Naive thymus-derived CD4-positive, alpha-beta T cell (primary cell): ENCODE measurements at regions of chr2 and their contacts with region 1.

Region 1: DNA sequence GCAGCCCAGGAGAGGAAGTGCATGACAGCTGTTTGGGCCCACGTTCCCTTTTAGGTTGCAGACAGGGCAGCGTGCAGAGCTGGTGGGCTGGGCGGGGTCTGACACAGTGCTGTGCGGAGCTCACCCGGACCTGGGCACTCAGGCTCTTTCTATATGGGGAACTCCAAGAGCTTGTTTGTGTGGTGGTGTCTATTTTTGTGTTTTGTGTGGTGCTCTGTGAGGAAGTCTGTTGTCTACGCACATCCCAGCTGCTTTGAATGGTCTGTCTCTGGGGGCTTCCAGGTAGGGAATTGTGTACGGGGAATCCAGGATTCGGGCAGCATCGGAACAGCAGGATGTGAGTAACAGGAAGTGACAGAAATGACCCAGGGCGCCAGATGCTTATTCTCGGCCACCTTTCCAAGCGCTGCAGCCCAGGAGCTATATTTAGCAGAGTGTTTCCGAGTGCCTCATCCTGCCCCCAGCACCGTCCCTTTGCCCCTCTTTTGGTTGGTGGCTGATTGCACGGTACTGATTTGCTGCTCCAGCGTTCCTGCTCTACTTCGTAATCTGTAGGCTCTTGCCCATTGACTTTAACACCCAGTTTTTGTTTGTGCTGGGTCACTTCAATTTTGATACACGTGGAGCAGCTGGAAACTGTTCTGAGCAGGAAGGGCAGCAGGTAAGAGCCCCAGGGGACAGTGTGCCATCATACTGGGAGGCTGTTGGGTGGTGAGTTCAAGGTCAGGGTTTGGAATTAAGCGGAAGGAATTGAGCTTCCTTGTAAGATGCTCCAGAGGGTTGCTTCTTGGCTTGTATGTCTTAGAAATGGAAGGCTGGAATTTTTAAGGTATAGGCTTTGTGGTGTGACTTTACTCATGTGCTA is 64.7 kb downstream of the DGKD start:
- DNase-seq: peak in 6 of 9 donors; percentile 40 to 69 (median 50)
- ATAC-seq: peak; percentile 74
- H3K4me3 ChIP-seq: peak overlapping the region; percentile 70
- H3K4me3 Mint-ChIP-seq: peak overlapping the region; percentile 84 to 99 (median 92)
- H3K27ac ChIP-seq: peak overlapping the region; percentile 80
- H3K27ac Mint-ChIP-seq: peak overlapping the region; percentile 86 to 99 (median 97)
- H3K4me1 ChIP-seq: peaks cover 65 to 93% of the 10 kb centered on the region in 2 donors
- H3K4me1 Mint-ChIP-seq: peaks cover 78 to 100% (median 96%) of the 10 kb centered on the region in 7 donors
- H3K27me3 ChIP-seq: no peaks in the 10 kb centered on the region
- H3K27me3 Mint-ChIP-seq: no peaks in the 10 kb centered on the region

Region 2: GRCh38 chr2:231890896-231891513 is 1528.0 kb before region 1 on chr2:
- CTCF ChIA-PET with region 1: no interaction called
- POLR2A ChIA-PET with region 1: no interaction called
- intact Hi-C with region 1: no loop called
- DNase-seq: no peak
- ATAC-seq: no peak
- H3K4me3 ChIP-seq: no peak overlapping the region
- H3K4me3 Mint-ChIP-seq: no peak overlapping the region
- H3K27ac ChIP-seq: no peak overlapping the region
- H3K27ac Mint-ChIP-seq: no peak overlapping the region
- H3K4me1 ChIP-seq: no peaks in the 10 kb centered on the region
- H3K4me1 Mint-ChIP-seq: peaks cover 0 to 2% (median 0%) of the 10 kb centered on the region in 7 donors
- H3K27me3 ChIP-seq: no peaks in the 10 kb centered on the region
- H3K27me3 Mint-ChIP-seq: peaks cover 10 to 19% (median 15%) of the 10 kb centered on the region in 5 donors

Region 3: GRCh38 chr2:232623783-232624727 is 794.9 kb before region 1 on chr2:
- CTCF ChIA-PET with region 1: no interaction called
- POLR2A ChIA-PET with region 1: no interaction called
- intact Hi-C with region 1: no loop called
- DNase-seq: no peak
- ATAC-seq: no peak
- H3K4me3 ChIP-seq: no peak overlapping the region
- H3K4me3 Mint-ChIP-seq: no peak overlapping the region
- H3K27ac ChIP-seq: no peak overlapping the region
- H3K27ac Mint-ChIP-seq: no peak overlapping the region
- H3K4me1 ChIP-seq: no peaks in the 10 kb centered on the region
- H3K4me1 Mint-ChIP-seq: peaks cover 0 to 2% (median 0%) of the 10 kb centered on the region in 7 donors
- H3K27me3 ChIP-seq: no peaks in the 10 kb centered on the region
- H3K27me3 Mint-ChIP-seq: peaks cover 5 to 20% (median 16%) of the 10 kb centered on the region in 5 donors

Region 4: DNA sequence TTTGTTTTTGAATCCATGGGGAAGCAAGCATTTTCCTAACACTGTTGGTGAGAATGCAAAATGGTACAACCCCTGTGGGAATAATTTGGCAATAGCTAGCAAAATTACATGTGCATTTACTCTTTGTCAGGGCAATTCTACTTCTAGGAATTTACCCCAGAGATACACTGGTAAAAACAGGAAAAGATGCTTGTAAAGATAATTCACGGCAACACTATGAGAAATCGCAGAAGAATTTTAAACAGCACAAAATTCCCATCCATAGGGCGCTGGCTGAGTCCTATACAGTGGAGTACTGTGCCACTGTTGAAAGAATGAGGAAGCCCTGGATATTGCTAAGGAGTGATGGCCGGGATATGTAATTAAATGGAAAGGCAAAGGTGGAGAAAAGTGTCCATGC is 11.1 kb after region 1 on chr2:
- CTCF ChIA-PET with region 1: interaction called, 156 read pairs
- POLR2A ChIA-PET with region 1: interaction called, 127 read pairs
- intact Hi-C with region 1: loop called in 1 of 2 experiments (anchors 1 kb)
- DNase-seq: no peak
- ATAC-seq: no peak
- H3K4me3 ChIP-seq: no peak overlapping the region
- H3K4me3 Mint-ChIP-seq: peak overlapping the region in 9 of 10 donors; percentile 6 to 66 (median 49)
- H3K27ac ChIP-seq: no peak overlapping the region
- H3K27ac Mint-ChIP-seq: peak overlapping the region in 8 of 9 donors; percentile 20 to 90 (median 78)
- H3K4me1 ChIP-seq: peaks cover 0 to 55% of the 10 kb centered on the region in 2 donors
- H3K4me1 Mint-ChIP-seq: peaks cover 39 to 91% (median 85%) of the 10 kb centered on the region in 7 donors
- H3K27me3 ChIP-seq: no peaks in the 10 kb centered on the region
- H3K27me3 Mint-ChIP-seq: no peaks in the 10 kb centered on the region

Region 5: DNA sequence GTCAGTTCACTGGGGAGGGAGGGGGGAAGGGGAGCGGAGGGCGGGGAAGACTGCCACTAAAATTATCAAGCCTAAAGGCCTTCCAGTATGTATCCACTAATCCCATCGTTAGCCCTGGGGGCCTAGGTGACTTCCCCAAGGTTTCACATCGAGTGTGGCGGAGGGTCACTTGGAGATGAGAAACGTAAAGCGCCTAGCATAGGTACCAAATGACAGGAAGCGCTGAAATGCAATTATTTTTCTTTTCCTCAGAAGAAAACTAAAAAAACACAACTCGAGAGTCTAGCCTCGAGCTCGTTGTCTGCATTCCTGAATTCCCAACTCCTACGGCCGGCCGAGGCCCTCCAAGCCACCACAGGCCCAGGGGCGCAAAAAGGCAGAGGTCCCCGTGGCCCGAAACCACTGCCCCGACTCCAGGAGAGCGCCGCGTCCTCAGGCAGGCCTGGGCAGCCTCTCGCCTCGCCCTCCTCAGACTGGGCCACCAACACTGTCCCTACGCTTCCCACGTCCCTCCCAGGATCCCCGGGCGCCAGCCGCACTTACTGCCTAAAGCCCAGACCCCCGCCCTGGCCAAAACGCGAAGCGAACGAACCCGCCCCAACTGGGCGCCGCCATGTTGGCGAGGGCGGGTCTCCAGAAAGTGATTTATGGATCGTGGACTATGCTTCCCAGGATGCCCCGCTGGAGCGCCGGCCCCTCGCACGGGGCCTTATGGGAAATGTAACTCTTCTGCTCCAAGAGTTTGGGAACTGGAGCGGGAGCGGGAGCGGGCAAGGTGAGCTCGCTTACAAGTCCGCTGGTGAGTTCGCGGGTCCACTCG is 147.4 kb after region 1 on chr2 and contains the start of gene USP40:
- CTCF ChIA-PET with region 1: no interaction called
- POLR2A ChIA-PET with region 1: no interaction called
- intact Hi-C with region 1: loop called in 1 of 2 experiments (anchors 10 kb)
- DNase-seq: peak; percentile 27 to 60 (median 39)
- ATAC-seq: peak; percentile 86
- H3K4me3 ChIP-seq: peak within 1 kb of the TSS; percentile 75
- H3K4me3 Mint-ChIP-seq: peak within 1 kb of the TSS; percentile 92 to 97 (median 94)
- H3K27ac ChIP-seq: peak within 1 kb of the TSS; percentile 87
- H3K27ac Mint-ChIP-seq: peak within 1 kb of the TSS; percentile 70 to 97 (median 95)
- H3K4me1 ChIP-seq: no peaks in the 10 kb centered on the region
- H3K4me1 Mint-ChIP-seq: peaks cover 7 to 21% (median 14%) of the 10 kb centered on the region in 7 donors
- H3K27me3 ChIP-seq: no peaks in the 10 kb centered on the region
- H3K27me3 Mint-ChIP-seq: peaks cover 0 to 22% (median 0%) of the 10 kb centered on the region in 5 donors
- total RNA-seq, gene USP40: 14.4 to 24.3 (median 20.8) TPM

Region 6: DNA sequence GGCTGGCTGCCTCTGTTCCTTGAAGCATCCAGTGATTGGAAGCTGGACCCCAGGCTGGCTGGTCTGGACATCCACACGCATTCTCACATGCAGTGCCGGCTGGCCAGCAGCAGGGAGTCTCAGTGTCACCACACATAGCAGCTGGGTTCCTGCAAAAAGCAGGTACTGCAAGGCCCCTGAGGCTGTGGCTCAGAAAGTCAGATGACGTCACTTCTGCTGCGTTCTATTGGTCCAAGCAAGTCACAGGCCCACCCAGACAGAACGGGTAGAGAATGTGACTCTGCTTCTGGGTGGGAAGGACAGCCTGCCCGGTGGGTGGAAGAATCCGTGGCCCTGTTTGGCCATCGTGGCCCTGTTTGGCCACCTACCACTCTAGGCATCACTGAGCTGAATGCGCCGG is 580.2 kb after region 1 on chr2:
- CTCF ChIA-PET with region 1: no interaction called
- POLR2A ChIA-PET with region 1: no interaction called
- intact Hi-C with region 1: no loop called
- DNase-seq: no peak
- ATAC-seq: no peak
- H3K4me3 ChIP-seq: no peak overlapping the region
- H3K4me3 Mint-ChIP-seq: no peak overlapping the region
- H3K27ac ChIP-seq: no peak overlapping the region
- H3K27ac Mint-ChIP-seq: no peak overlapping the region
- H3K4me1 ChIP-seq: peaks cover 19 to 24% of the 10 kb centered on the region in 2 donors
- H3K4me1 Mint-ChIP-seq: peaks cover 24 to 55% (median 47%) of the 10 kb centered on the region in 7 donors
- H3K27me3 ChIP-seq: no peaks in the 10 kb centered on the region
- H3K27me3 Mint-ChIP-seq: peaks cover 0 to 25% (median 0%) of the 10 kb centered on the region in 5 donors